B cell (primary cell): ENCODE measurements at regions of chr12 and their contacts with region 1.

Region 1: DNA sequence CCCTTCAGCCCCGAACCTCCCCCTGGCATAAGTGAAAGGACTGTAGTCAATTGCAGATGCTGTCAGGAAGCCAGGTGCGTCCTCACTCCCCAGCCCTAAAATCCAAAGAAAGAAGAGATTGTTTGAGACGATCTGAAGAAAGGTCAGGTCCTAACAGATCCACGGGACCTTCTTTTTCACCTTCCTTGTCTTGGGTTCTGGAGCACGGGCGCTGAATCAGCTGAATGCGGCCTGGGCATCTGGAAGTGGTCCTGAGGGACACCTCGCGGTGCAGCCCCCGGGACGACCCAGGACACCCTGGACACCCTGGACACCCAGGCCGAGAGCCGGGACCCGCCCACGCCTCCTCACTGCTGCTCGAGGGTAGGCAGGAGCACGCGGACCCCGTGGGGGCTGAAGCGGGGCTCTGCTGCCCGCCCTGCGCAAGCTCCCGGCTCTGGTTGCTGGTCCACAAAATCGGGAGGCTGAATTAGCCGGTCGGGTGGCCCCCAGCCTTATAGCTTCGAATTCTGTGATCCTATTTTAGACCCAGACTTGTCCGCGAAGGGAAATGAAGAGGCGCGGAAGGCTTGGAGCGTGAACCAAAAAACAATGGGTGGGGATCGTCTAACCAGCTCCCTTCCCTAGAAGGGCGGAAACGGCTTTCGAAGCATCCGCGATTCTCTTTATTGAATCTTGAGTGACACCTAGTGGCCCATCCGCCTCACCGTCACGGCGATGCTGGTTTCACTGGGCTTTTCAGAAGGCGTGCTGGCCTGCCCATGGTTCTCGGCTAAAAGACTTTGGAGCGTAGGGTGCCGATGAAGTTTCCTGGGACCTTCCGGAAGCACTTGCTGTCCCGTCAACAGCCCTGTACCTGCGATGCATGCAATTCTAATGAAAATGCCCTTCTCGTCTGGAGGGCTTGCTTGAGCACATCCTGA is 46.4 kb upstream of the PLXNC1 start:
- DNase-seq: peak; percentile 90
- ATAC-seq: peak; percentile 84
- H3K4me3 ChIP-seq: peak overlapping the region; percentile 51 to 94 (median 65)
- H3K4me3 Mint-ChIP-seq: peak overlapping the region; percentile 91
- H3K27ac ChIP-seq: no peak overlapping the region
- H3K27ac Mint-ChIP-seq: peak overlapping the region; percentile 50
- H3K4me1 ChIP-seq: peaks cover 4 to 14% of the 10 kb centered on the region in 2 donors
- H3K4me1 Mint-ChIP-seq: peaks cover 10% of the 10 kb centered on the region
- H3K27me3 ChIP-seq: peaks cover 0 to 31% (median 11%) of the 10 kb centered on the region in 4 experiments
- H3K27me3 Mint-ChIP-seq: peaks cover 52% of the 10 kb centered on the region
- CTCF ChIP-seq: peak; percentile 78

Region 2: DNA sequence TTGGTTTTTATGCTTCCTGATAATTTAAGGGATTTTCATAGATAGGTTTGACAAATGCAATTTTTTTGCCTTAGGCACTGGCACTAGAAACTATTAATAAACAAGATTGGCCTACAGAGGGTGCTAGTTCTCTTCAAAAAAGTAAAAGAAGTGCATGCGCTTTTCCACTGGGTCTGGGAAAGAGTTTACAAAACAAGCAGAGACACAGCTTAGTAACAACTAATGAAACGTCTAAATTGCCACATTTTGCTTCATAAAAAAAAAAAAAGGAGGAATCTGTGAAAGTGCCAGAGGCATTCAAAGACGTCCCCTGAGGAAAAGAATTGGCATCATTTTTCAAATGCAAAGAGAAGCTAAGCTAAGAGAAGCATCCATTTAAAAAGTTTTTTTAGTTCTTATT is 1114.6 kb before region 1 on chr12:
- CTCF ChIA-PET with region 1: interaction called, 63 read pairs
- POLR2A ChIA-PET with region 1: interaction called, 3 read pairs
- intact Hi-C with region 1: no loop called
- DNase-seq: peak; percentile 72
- ATAC-seq: peak; percentile 37
- H3K4me3 ChIP-seq: peak overlapping the region in 4 of 5 experiments; percentile 12 to 57 (median 34)
- H3K4me3 Mint-ChIP-seq: peak overlapping the region; percentile 80
- H3K27ac ChIP-seq: peak overlapping the region; percentile 66 to 77
- H3K27ac Mint-ChIP-seq: peak overlapping the region; percentile 92
- H3K4me1 ChIP-seq: peaks cover 21 to 31% of the 10 kb centered on the region in 2 donors
- H3K4me1 Mint-ChIP-seq: peaks cover 30% of the 10 kb centered on the region
- H3K27me3 ChIP-seq: no peaks in the 10 kb centered on the region
- H3K27me3 Mint-ChIP-seq: no peaks in the 10 kb centered on the region
- CTCF ChIP-seq: peak; percentile 81

Region 3: GRCh38 chr12:93514853-93515252 is 587.1 kb before region 1 on chr12:
- CTCF ChIA-PET with region 1: interaction called, 17 read pairs
- POLR2A ChIA-PET with region 1: no interaction called
- intact Hi-C with region 1: no loop called
- DNase-seq: no peak
- ATAC-seq: no peak
- H3K4me3 ChIP-seq: no peak overlapping the region
- H3K4me3 Mint-ChIP-seq: no peak overlapping the region
- H3K27ac ChIP-seq: no peak overlapping the region
- H3K27ac Mint-ChIP-seq: no peak overlapping the region
- H3K4me1 ChIP-seq: no peaks in the 10 kb centered on the region
- H3K4me1 Mint-ChIP-seq: no peaks in the 10 kb centered on the region
- H3K27me3 ChIP-seq: no peaks in the 10 kb centered on the region
- H3K27me3 Mint-ChIP-seq: no peaks in the 10 kb centered on the region
- CTCF ChIP-seq: no peak

Region 4: DNA sequence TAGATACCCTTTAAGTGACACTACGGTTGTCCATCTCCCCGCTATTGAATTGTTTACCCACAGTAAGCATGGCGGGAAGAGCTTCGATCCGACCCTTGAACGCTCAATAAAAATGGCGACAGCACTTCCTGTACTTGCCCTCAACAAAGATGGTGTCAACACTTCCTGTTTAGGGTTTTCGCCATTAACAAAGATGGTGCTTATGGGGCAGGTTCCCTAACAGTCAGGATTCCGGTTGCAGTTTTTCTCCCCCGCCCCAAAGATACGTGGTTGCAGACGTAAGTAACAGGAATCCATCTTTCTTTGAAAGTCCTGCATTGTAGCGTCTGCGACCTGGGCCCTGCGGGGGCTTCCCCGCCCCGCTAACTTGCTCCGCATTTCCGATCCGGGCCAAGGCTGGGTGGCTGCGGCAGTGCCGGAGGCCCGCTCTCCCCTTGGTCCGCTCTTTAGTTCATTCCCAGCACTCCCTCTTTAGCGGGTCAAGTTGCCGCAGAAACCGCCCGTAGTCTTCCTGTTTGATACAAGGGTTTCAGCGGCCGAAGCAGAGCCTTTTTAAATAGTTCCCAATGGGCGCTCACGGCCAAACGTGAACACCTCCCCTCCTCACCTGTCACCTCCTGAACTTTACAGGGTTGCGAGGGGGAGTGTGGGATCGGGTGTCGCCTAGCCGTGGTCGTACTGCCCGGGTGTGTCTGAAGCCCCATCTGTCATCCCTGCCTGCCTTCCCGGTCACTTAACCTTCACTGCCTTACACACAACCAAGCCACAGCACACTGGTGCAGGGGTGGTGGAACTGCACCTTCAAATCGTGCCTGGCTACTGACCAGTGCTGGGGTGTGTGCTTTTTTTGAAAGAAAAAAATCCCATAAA is 424.6 kb before region 1 on chr12 and contains the start of gene CRADD:
- CTCF ChIA-PET with region 1: interaction called, 12 read pairs
- POLR2A ChIA-PET with region 1: no interaction called
- intact Hi-C with region 1: loop called (anchors 1 kb)
- DNase-seq: peak; percentile 98
- ATAC-seq: peak; percentile 91
- H3K4me3 ChIP-seq: peak within 1 kb of the TSS; percentile 50 to 90 (median 86)
- H3K4me3 Mint-ChIP-seq: peak within 1 kb of the TSS; percentile 95
- H3K27ac ChIP-seq: peak within 1 kb of the TSS; percentile 95 to 99
- H3K27ac Mint-ChIP-seq: peak within 1 kb of the TSS; percentile 99
- H3K4me1 ChIP-seq: peaks cover 14 to 18% of the 10 kb centered on the region in 2 donors
- H3K4me1 Mint-ChIP-seq: peaks cover 31% of the 10 kb centered on the region
- H3K27me3 ChIP-seq: peaks cover 0 to 5% (median 0%) of the 10 kb centered on the region in 4 experiments
- H3K27me3 Mint-ChIP-seq: peaks cover 15% of the 10 kb centered on the region
- CTCF ChIP-seq: no peak
- total RNA-seq, gene CRADD: 15.1 and 15.6 TPM in 2 replicates

Region 5: GRCh38 chr12:94020335-94020734 is 81.7 kb before region 1 on chr12:
- CTCF ChIA-PET with region 1: no interaction called
- POLR2A ChIA-PET with region 1: no interaction called
- intact Hi-C with region 1: no loop called
- DNase-seq: no peak
- ATAC-seq: no peak
- H3K4me3 ChIP-seq: no peak overlapping the region
- H3K4me3 Mint-ChIP-seq: no peak overlapping the region
- H3K27ac ChIP-seq: no peak overlapping the region
- H3K27ac Mint-ChIP-seq: no peak overlapping the region
- H3K4me1 ChIP-seq: no peaks in the 10 kb centered on the region
- H3K4me1 Mint-ChIP-seq: no peaks in the 10 kb centered on the region
- H3K27me3 ChIP-seq: no peaks in the 10 kb centered on the region
- H3K27me3 Mint-ChIP-seq: peaks cover 15% of the 10 kb centered on the region
- CTCF ChIP-seq: no peak

Region 6: DNA sequence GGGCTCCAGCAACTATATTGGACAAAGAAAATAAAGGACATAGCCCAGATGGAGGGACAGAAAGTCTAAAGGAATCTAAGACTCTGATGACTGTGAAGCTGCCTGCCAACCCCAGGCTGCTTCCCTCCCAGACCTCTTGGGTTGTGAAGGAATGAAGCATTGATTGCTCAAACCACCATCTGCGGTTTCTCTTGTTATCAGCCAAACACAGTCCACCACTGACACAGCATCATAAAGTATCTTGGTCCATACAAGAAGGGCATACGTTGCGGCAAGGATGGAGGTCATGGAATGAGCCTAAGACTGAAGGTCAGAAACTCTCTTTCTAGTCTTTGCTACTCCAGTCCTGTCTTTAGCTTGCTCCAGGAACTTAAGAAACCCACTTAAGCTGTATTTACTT is 12.1 kb before region 1 on chr12:
- CTCF ChIA-PET with region 1: interaction called, 22 read pairs
- POLR2A ChIA-PET with region 1: no interaction called
- intact Hi-C with region 1: no loop called
- DNase-seq: no peak
- ATAC-seq: no peak
- H3K4me3 ChIP-seq: no peak overlapping the region
- H3K4me3 Mint-ChIP-seq: no peak overlapping the region
- H3K27ac ChIP-seq: no peak overlapping the region
- H3K27ac Mint-ChIP-seq: no peak overlapping the region
- H3K4me1 ChIP-seq: no peaks in the 10 kb centered on the region
- H3K4me1 Mint-ChIP-seq: no peaks in the 10 kb centered on the region
- H3K27me3 ChIP-seq: peaks cover 0 to 2% (median 0%) of the 10 kb centered on the region in 4 experiments
- H3K27me3 Mint-ChIP-seq: peaks cover 22% of the 10 kb centered on the region
- CTCF ChIP-seq: no peak

Region 7: GRCh38 chr12:94386422-94386821 is 284.4 kb after region 1 on chr12:
- CTCF ChIA-PET with region 1: no interaction called
- POLR2A ChIA-PET with region 1: no interaction called
- intact Hi-C with region 1: no loop called
- DNase-seq: no peak
- ATAC-seq: no peak
- H3K4me3 ChIP-seq: no peak overlapping the region
- H3K4me3 Mint-ChIP-seq: no peak overlapping the region
- H3K27ac ChIP-seq: no peak overlapping the region
- H3K27ac Mint-ChIP-seq: no peak overlapping the region
- H3K4me1 ChIP-seq: no peaks in the 10 kb centered on the region
- H3K4me1 Mint-ChIP-seq: no peaks in the 10 kb centered on the region
- H3K27me3 ChIP-seq: no peaks in the 10 kb centered on the region
- H3K27me3 Mint-ChIP-seq: no peaks in the 10 kb centered on the region
- CTCF ChIP-seq: no peak

Region 8: GRCh38 chr12:94603434-94604365 is 501.7 kb after region 1 on chr12:
- CTCF ChIA-PET with region 1: no interaction called
- POLR2A ChIA-PET with region 1: interaction called, 10 read pairs
- intact Hi-C with region 1: no loop called
- DNase-seq: peak; percentile 68
- ATAC-seq: peak; percentile 70
- H3K4me3 ChIP-seq: no peak overlapping the region
- H3K4me3 Mint-ChIP-seq: no peak overlapping the region
- H3K27ac ChIP-seq: no peak overlapping the region
- H3K27ac Mint-ChIP-seq: no peak overlapping the region
- H3K4me1 ChIP-seq: no peaks in the 10 kb centered on the region
- H3K4me1 Mint-ChIP-seq: no peaks in the 10 kb centered on the region
- H3K27me3 ChIP-seq: no peaks in the 10 kb centered on the region
- H3K27me3 Mint-ChIP-seq: no peaks in the 10 kb centered on the region
- CTCF ChIP-seq: peak; percentile 77

Region 9: DNA sequence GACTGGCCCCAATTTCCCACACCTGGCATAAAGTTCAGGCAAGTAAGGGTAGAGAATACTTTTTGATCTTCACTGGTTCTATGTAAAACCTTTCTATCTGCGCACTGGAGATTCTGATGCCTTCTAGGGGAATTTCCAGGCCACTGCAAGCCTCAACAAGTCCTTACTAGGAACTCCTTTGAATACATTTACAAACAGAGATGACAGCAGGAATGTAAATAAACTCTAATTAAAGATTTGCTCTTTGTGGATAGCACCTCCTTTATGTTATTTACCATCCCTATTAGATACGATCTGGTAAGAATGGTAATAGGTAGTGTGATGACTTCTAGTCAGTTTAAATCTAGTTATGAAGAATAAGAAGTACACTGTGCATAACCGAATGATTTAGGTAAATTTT is 1619.4 kb after region 1 on chr12:
- CTCF ChIA-PET with region 1: no interaction called
- POLR2A ChIA-PET with region 1: no interaction called
- intact Hi-C with region 1: no loop called
- DNase-seq: no peak
- ATAC-seq: no peak
- H3K4me3 ChIP-seq: no peak overlapping the region
- H3K4me3 Mint-ChIP-seq: no peak overlapping the region
- H3K27ac ChIP-seq: no peak overlapping the region
- H3K27ac Mint-ChIP-seq: no peak overlapping the region
- H3K4me1 ChIP-seq: no peaks in the 10 kb centered on the region
- H3K4me1 Mint-ChIP-seq: peaks cover 5% of the 10 kb centered on the region
- H3K27me3 ChIP-seq: peaks cover 0 to 9% (median 0%) of the 10 kb centered on the region in 4 experiments
- H3K27me3 Mint-ChIP-seq: peaks cover 3% of the 10 kb centered on the region
- CTCF ChIP-seq: no peak